Mucosa of descending colon (tissue), 3 donors: ENCODE measurements at regions of chr2 and their contacts with region 1.

Region 1: DNA sequence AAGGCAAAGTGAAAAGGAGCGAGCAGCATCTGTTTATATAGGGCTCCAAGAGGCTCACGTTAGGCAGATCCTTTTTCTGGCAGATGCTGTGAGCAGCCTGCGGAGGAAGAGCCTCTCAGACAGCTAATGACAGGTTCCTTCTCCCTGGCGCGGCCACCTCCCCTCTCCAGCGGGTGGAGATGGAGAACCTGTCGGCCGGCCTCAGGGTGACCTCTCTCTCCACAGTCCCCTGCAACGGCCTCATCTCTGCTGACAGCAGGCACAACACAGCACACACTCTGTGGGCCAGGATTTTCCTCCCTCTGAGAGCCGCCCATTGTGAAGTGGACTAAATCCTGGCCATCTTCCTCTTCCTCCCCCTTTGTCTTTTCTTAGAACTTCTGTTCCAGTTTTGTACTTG is 119.8 kb downstream of the PRKCE start:
- DNase-seq: peak in 2 of 3 donors; percentile 22 to 37
- ATAC-seq: peak; percentile 28
- H3K4me3 ChIP-seq: no peak overlapping the region
- H3K4me1 ChIP-seq: peaks cover 3% of the 10 kb centered on the region
- CTCF ChIP-seq: no peak

Region 2: GRCh38 chr2:45650851-45651414 is 120.3 kb before region 1 on chr2:
- intact Hi-C with region 1: loop called in 1 of 2 experiments (anchors 5 kb)
- DNase-seq: peak; percentile 94 to 99 (median 96)
- ATAC-seq: peak; percentile 89
- H3K4me3 ChIP-seq: peak overlapping the region; percentile 72
- H3K4me1 ChIP-seq: peaks cover 23% of the 10 kb centered on the region
- CTCF ChIP-seq: peak; percentile 29